ENCODE measurements at regions of chrX and their contacts with region 1.

Region 1: DNA sequence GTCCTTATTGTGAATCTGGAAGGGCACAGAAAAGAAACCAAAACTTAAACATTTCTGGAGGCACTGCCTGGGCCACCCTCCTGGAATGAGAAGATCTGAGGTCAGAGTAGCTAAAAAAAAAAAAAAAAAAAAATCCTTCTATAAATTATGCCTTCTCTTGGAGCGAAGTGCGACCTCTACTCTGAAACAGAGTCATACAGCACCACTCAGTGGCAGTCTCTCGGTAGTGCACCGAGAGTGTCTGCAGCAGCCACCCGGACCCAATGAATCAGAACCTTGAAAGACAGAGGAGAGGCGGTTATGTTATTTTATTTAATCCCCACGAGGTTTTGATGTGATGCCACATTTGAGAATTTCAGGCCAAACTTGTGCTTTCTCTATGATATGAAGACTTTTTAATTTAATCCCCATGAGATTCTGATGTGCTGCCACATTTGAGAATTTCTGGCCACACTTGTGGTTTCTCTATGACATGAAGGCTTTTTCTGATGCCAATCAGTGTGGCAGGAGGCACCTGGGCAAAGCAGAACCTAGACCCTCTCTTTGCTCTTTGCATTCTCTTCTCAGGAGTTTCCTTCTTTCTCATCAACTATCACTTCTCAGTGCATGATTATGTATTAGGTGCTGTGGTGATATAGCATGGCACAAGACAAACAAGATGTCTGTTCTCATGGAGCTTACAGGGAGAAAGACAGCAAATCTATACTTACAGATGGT is 5.6 kb upstream of the CT47C1 start:
- DNase-seq: peak; percentile 64 to 72 (median 66)
- ATAC-seq: peak; percentile 66
- H3K4me3 ChIP-seq: no peak overlapping the region
- H3K27ac ChIP-seq: no peak overlapping the region
- H3K4me1 ChIP-seq: no peaks in the 10 kb centered on the region
- H3K27me3 ChIP-seq: no peaks in the 10 kb centered on the region
- CTCF ChIP-seq: peak; percentile 20 to 71 (median 58)
- POLR2A ChIP-seq: no peak

Region 2: DNA sequence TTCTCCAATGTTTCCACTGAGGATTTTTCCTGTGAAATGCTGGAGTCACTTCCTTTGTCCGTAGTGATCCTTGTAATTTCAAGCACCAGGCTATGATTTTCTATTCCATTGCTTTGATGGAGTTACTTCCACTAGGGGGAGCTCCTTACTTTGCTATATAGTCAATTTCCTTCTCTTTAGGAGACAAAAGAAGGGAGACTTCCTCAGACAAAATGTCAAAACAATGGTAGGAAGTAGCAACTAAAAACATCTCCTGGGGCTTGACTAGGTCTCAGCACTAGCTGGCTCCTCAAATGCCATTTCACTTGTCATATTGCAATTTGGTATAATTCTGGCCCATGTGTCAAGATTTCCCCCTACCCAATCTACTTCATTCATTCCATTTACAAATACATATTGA is 219.5 kb before region 1 on chrX:
- intact Hi-C with region 1: loop called (anchors 5 kb)
- DNase-seq: peak in 1 of 4 donors; percentile 10
- ATAC-seq: peak; percentile 56
- H3K4me3 ChIP-seq: no peak overlapping the region
- H3K27ac ChIP-seq: no peak overlapping the region
- H3K4me1 ChIP-seq: no peaks in the 10 kb centered on the region
- H3K27me3 ChIP-seq: no peaks in the 10 kb centered on the region
- CTCF ChIP-seq: peak; percentile 39 to 81 (median 51)
- POLR2A ChIP-seq: no peak